Lower lobe of right lung (tissue), 2 donors: ENCODE measurements at regions of chr17 and their contacts with region 1.

Region 1: DNA sequence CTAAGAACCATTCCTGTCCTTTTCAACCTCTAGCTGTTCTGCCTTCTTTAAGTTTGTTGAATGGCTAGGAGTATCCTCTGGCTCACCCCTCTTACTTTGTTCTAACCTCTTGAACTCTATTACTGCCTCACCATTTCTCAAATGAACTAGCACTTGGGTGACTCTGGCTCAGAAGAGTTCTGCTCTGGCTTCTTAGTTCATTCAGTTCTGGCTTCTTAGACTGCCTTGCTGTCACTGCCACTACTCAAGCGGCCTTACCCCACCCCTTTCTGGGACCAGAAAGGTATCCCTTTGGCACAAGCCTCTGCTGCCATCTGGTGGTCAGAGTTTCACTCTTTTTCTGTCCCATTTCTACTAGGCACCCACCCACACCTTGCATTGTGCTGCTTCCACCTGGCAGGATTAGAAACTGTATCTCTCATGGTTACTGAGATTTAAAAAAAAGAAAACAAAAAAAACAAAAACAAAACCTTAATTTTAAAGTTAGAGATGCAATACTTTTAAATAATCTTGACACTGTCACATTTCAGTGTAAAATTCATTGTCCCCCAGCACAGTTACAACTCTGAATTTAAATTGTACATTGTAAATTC is 6.8 kb upstream of the ABCA10 start:
- DNase-seq: peak; percentile 64
- ATAC-seq: peak; percentile 81 to 90
- H3K4me3 ChIP-seq: no peak overlapping the region
- H3K27ac ChIP-seq: no peak overlapping the region
- H3K4me1 ChIP-seq: no peaks in the 10 kb centered on the region
- H3K27me3 ChIP-seq: no peaks in the 10 kb centered on the region
- CTCF ChIP-seq: peak; percentile 72

Region 2: GRCh38 chr17:68771867-68772515 is 463.4 kb before region 1 on chr17:
- intact Hi-C with region 1: loop called (anchors 10 kb)
- DNase-seq: no peak
- ATAC-seq: peak; percentile 75 to 82
- H3K4me3 ChIP-seq: peak overlapping the region; percentile 25
- H3K27ac ChIP-seq: peak overlapping the region; percentile 39
- H3K4me1 ChIP-seq: peaks cover 4% of the 10 kb centered on the region
- H3K27me3 ChIP-seq: no peaks in the 10 kb centered on the region
- CTCF ChIP-seq: peak; percentile 60

Region 3: GRCh38 chr17:69144331-69145255 is 90.8 kb before region 1 on chr17:
- intact Hi-C with region 1: no loop called
- DNase-seq: no peak
- ATAC-seq: no peak
- H3K4me3 ChIP-seq: no peak overlapping the region
- H3K27ac ChIP-seq: no peak overlapping the region
- H3K4me1 ChIP-seq: no peaks in the 10 kb centered on the region
- H3K27me3 ChIP-seq: no peaks in the 10 kb centered on the region
- CTCF ChIP-seq: no peak

Region 4: GRCh38 chr17:69287168-69287567 is 51.7 kb after region 1 on chr17:
- intact Hi-C with region 1: no loop called
- DNase-seq: no peak
- ATAC-seq: no peak
- H3K4me3 ChIP-seq: no peak overlapping the region
- H3K27ac ChIP-seq: no peak overlapping the region
- H3K4me1 ChIP-seq: no peaks in the 10 kb centered on the region
- H3K27me3 ChIP-seq: no peaks in the 10 kb centered on the region
- CTCF ChIP-seq: no peak